ENCODE measurements at regions of chr2 and their contacts with region 1.

Region 1: DNA sequence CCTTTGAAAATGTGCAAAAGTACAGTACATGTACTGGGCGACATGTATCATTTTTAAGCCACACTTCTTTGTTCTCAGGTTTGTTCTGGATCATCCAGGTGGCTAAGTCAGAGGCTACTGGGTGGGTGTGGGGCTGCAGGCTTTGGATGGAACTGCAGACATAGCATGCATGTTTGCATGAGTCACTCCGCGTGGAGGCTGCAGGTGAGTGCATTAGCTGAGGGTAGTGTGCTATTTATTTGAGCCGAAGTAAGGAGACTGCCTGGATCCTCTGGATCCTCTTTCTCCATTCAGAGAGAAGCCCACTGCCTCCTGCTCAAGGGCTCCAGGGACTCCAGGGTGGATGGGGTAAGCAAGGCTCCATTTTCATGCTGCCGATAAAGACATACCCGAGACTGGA is 9.4 kb upstream of the NEURL3 start:
- DNase-seq: peak in 1 of 2 donors; percentile 79
- H3K4me3 ChIP-seq: no peak overlapping the region
- H3K27ac ChIP-seq: no peak overlapping the region
- H3K4me1 ChIP-seq: peaks cover 3% of the 10 kb centered on the region
- H3K27me3 ChIP-seq: no peaks in the 10 kb centered on the region
- CTCF ChIP-seq: no peak
- POLR2A ChIP-seq: no peak

Region 2: GRCh38 chr2:96116879-96117697 is 397.4 kb before region 1 on chr2:
- intact Hi-C with region 1: loop called (anchors 5 kb)
- DNase-seq: no peak
- H3K4me3 ChIP-seq: peak overlapping the region; percentile 57 to 74
- H3K27ac ChIP-seq: peak overlapping the region; percentile 48
- H3K4me1 ChIP-seq: peaks cover 13% of the 10 kb centered on the region
- H3K27me3 ChIP-seq: no peaks in the 10 kb centered on the region
- CTCF ChIP-seq: peak in 2 of 3 experiments; percentile 8 to 78
- POLR2A ChIP-seq: no peak

Region 3: DNA sequence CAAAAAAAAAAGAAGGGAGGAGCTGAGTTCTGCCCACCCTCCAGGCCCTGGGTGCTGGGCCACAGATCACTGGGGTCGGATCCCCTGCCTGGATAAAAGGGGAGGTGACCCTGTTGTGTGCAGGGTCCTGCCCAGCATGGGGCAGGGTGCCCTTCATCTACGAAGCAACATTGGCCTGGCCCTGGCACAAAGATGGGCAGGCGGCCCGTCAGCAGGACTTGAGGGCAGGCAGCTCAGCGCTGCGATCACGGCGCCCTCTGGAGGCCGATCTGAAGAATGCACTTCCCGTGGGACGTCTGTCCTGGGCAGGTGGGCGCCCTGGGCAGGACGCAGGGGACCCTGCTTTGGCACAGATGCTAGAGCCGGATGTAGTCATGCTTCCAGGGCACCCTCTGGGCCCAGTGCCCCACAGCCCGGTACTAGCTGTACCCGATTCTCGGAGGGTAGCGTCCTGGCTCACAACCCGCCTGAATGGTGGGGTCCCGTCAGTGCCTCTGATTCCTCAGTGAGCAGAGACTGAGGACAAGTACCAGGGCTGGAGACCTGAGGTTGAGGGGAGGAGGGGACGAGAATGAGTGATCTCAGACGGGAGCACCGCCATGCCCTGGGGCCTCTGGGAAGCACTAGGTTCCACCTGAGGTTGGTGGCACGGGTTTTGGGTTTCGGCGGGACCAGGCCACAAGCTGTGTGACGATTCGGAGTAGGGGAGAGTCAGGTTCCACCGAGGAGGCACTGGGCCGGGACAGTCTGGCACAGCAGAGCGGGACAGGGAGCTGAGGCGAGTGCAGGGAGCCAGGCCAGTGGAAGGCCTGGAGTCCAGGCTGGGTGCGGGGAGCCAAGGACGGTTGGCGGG is 40.0 kb after region 1 on chr2:
- intact Hi-C with region 1: loop called (anchors 5 kb)
- DNase-seq: peak in 1 of 2 donors; percentile 90
- H3K4me3 ChIP-seq: no peak overlapping the region
- H3K27ac ChIP-seq: no peak overlapping the region
- H3K4me1 ChIP-seq: peaks cover 11% of the 10 kb centered on the region
- H3K27me3 ChIP-seq: no peaks in the 10 kb centered on the region
- CTCF ChIP-seq: peak; percentile 80 to 92 (median 86)
- POLR2A ChIP-seq: no peak